CD8-positive, alpha-beta memory T cell (primary cell): ENCODE measurements at regions of chr6 and their contacts with region 1.

Region 1: GRCh38 chr6:27838058-27838944 is 73.9 kb downstream of the OR2B2 start:
- DNase-seq: peak; percentile 67 to 93 (median 92)
- H3K4me3 ChIP-seq: peak overlapping the region; percentile 71
- H3K4me3 Mint-ChIP-seq: no peak overlapping the region
- H3K27ac ChIP-seq: peak overlapping the region; percentile 99
- H3K27ac Mint-ChIP-seq: no peak overlapping the region
- H3K4me1 ChIP-seq: peaks cover 30% of the 10 kb centered on the region
- H3K4me1 Mint-ChIP-seq: peaks cover 12 to 23% (median 19%) of the 10 kb centered on the region in 3 donors
- H3K27me3 ChIP-seq: no peaks in the 10 kb centered on the region
- H3K27me3 Mint-ChIP-seq: peaks cover 5 to 13% of the 10 kb centered on the region in 2 donors

Region 2: DNA sequence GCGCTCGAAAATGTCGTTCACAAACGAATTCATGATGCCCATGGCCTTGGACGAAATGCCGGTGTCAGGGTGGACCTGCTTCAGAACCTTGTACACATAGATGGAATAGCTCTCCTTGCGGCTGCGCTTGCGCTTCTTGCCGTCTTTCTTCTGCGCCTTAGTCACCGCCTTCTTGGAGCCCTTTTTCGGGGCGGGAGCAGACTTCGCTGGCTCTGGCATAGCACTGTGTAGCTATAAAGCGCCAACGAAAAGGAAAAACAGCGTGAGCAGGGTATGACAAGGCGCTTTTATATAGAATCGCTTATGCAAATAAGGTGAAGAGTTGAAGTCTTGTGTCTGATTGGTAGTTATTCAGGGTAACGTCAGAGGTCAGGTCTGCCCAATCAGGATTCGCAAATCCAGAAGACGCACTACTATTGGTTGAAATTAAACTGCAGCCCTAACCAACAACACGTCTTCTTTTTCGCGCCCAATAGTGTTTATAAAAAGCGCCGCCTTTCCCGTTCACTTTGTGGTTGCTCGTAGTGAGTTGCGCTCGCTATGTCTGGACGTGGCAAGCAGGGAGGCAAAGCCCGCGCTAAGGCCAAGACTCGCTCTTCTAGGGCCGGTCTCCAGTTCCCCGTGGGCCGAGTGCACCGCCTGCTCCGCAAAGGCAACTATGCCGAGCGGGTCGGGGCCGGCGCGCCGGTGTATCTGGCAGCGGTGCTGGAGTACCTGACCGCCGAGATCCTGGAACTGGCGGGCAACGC is 705.6 kb before region 1 on chr6:
- CTCF ChIA-PET with region 1: no interaction called
- POLR2A ChIA-PET with region 1: interaction called, 28 read pairs
- DNase-seq: peak; percentile 77 to 98 (median 96)
- H3K4me3 ChIP-seq: peak overlapping the region; percentile 75
- H3K4me3 Mint-ChIP-seq: no peak overlapping the region
- H3K27ac ChIP-seq: peak overlapping the region; percentile 89
- H3K27ac Mint-ChIP-seq: no peak overlapping the region
- H3K4me1 ChIP-seq: peaks cover 20% of the 10 kb centered on the region
- H3K4me1 Mint-ChIP-seq: peaks cover 7 to 21% (median 16%) of the 10 kb centered on the region in 3 donors
- H3K27me3 ChIP-seq: no peaks in the 10 kb centered on the region
- H3K27me3 Mint-ChIP-seq: peaks cover 0 to 2% of the 10 kb centered on the region in 2 donors

Region 3: GRCh38 chr6:27795697-27796494 is 42.4 kb before region 1 on chr6:
- CTCF ChIA-PET with region 1: interaction called, 4 read pairs
- POLR2A ChIA-PET with region 1: interaction called, 14 read pairs
- DNase-seq: peak in 4 of 5 donors; percentile 39 to 77 (median 64)
- H3K4me3 ChIP-seq: no peak overlapping the region
- H3K4me3 Mint-ChIP-seq: peak overlapping the region in 1 of 7 donors; percentile 40
- H3K27ac ChIP-seq: no peak overlapping the region
- H3K27ac Mint-ChIP-seq: peak overlapping the region in 5 of 8 donors; percentile 3 to 64 (median 53)
- H3K4me1 ChIP-seq: peaks cover 20% of the 10 kb centered on the region
- H3K4me1 Mint-ChIP-seq: peaks cover 22 to 29% (median 28%) of the 10 kb centered on the region in 3 donors
- H3K27me3 ChIP-seq: peaks cover 8% of the 10 kb centered on the region
- H3K27me3 Mint-ChIP-seq: peaks cover 10% of the 10 kb centered on the region in 2 donors

Region 4: GRCh38 chr6:27825025-27825793 is 13.1 kb before region 1 on chr6:
- CTCF ChIA-PET with region 1: interaction called, 65 read pairs
- POLR2A ChIA-PET with region 1: interaction called, 138 read pairs
- DNase-seq: no peak
- H3K4me3 ChIP-seq: peak overlapping the region; percentile 91
- H3K4me3 Mint-ChIP-seq: peak overlapping the region; percentile 82 to 97 (median 90)
- H3K27ac ChIP-seq: peak overlapping the region; percentile 96
- H3K27ac Mint-ChIP-seq: peak overlapping the region; percentile 93 to 100 (median 98)
- H3K4me1 ChIP-seq: peaks cover 14% of the 10 kb centered on the region
- H3K4me1 Mint-ChIP-seq: peaks cover 31 to 42% (median 38%) of the 10 kb centered on the region in 3 donors
- H3K27me3 ChIP-seq: no peaks in the 10 kb centered on the region
- H3K27me3 Mint-ChIP-seq: no peaks in the 10 kb centered on the region

Region 5: GRCh38 chr6:27864906-27865849 is 26.9 kb after region 1 on chr6:
- CTCF ChIA-PET with region 1: interaction called, 168 read pairs
- POLR2A ChIA-PET with region 1: interaction called, 227 read pairs
- DNase-seq: peak; percentile 42 to 89 (median 81)
- H3K4me3 ChIP-seq: peak overlapping the region; percentile 63
- H3K4me3 Mint-ChIP-seq: peak overlapping the region; percentile 93 to 99 (median 96)
- H3K27ac ChIP-seq: peak overlapping the region; percentile 83
- H3K27ac Mint-ChIP-seq: peak overlapping the region; percentile 87 to 99 (median 97)
- H3K4me1 ChIP-seq: peaks cover 25% of the 10 kb centered on the region
- H3K4me1 Mint-ChIP-seq: peaks cover 36 to 50% (median 45%) of the 10 kb centered on the region in 3 donors
- H3K27me3 ChIP-seq: no peaks in the 10 kb centered on the region
- H3K27me3 Mint-ChIP-seq: no peaks in the 10 kb centered on the region

Region 6: DNA sequence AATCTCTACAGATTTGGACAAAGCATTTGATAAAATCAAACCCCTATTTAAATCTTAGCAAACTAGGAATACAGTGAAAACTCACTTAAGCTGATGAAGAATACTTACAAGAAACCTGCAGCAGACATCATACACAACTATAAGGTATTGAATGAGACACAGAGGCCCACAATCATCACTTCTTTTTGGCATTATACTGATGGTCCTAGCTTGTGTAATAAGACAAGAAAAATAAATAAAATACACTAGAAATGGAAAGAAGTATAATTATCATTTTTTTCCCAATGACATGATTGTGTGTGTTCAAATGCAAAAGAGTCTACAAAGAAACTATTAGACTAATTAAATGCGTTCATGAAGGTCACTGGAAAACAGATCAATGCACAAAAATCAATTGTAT is 109.9 kb after region 1 on chr6:
- CTCF ChIA-PET with region 1: no interaction called
- POLR2A ChIA-PET with region 1: no interaction called
- DNase-seq: no peak
- H3K4me3 ChIP-seq: no peak overlapping the region
- H3K4me3 Mint-ChIP-seq: no peak overlapping the region
- H3K27ac ChIP-seq: no peak overlapping the region
- H3K27ac Mint-ChIP-seq: no peak overlapping the region
- H3K4me1 ChIP-seq: no peaks in the 10 kb centered on the region
- H3K4me1 Mint-ChIP-seq: no peaks in the 10 kb centered on the region
- H3K27me3 ChIP-seq: no peaks in the 10 kb centered on the region
- H3K27me3 Mint-ChIP-seq: peaks cover 18 to 66% of the 10 kb centered on the region in 2 donors